Activated B cell treated with CpG ODN at 0.5 μM for 24 hours (primary cell): ENCODE measurements at regions of chr4 and their contacts with region 1.

Region 1: GRCh38 chr4:122732329-122733026 is at the start of gene BBS12:
- DNase-seq: peak; percentile 90
- ATAC-seq: peak; percentile 97
- H3K4me3 Mint-ChIP-seq: peak within 1 kb of the TSS; percentile 98
- H3K27ac Mint-ChIP-seq: peak within 1 kb of the TSS; percentile 98
- H3K4me1 Mint-ChIP-seq: peaks cover 13% of the 10 kb centered on the region
- H3K27me3 Mint-ChIP-seq: no peaks in the 10 kb centered on the region
- CTCF ChIP-seq: no peak
- total RNA-seq, gene BBS12: 2.5 and 3.3 TPM in 2 replicates

Region 2: GRCh38 chr4:121800961-121801714 is 931.3 kb before region 1 on chr4 and contains the start of gene EXOSC9:
- CTCF ChIA-PET with region 1: no interaction called
- POLR2A ChIA-PET with region 1: no interaction called
- intact Hi-C with region 1: loop called (anchors 1 kb)
- DNase-seq: peak; percentile 94
- ATAC-seq: peak; percentile 81
- H3K4me3 Mint-ChIP-seq: peak within 1 kb of the TSS; percentile 96
- H3K27ac Mint-ChIP-seq: peak within 1 kb of the TSS; percentile 100
- H3K4me1 Mint-ChIP-seq: peaks cover 31% of the 10 kb centered on the region
- H3K27me3 Mint-ChIP-seq: no peaks in the 10 kb centered on the region
- CTCF ChIP-seq: no peak
- total RNA-seq, gene EXOSC9: 37.5 and 39.1 TPM in 2 replicates

Region 3: DNA sequence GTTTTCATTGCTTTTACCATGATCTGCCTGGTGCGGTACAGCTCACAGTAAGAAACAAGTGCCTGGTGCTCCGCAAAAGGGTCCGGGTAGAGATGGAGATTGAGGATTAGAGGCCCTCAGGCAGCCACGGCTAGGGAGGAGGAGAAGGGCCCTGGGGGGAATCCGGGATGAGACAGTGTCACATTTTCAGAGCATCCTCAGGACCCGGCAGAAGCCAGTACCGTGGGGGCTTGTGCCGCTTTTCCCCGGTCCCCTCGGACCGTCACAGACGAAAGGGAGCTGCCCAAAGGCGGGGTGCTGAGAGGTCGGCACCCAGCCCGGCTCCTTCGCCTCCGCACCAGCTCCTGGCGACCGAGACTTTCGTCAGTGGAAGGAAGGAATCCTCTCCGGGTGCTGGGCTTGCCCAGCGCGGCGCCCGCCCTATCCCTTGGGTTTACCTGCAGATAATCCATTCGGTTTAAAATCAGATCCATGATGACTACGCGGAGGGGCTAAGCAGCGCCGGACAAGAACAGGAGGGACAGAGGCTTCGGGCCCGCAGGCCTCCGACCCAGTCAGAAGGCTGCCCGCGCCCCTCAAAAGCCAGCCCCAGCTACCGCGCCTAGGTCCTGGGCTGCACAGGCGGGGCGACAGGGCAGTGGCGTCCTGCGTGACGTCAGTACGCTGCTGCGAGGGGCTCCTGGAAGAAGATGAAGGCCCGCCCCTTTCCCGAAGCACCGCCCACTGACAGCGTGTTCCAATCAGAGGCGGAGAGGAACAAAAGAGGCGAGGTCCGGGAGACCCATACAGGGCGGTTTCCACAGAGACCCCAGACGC is 862.4 kb before region 1 on chr4 and contains the start of gene BBS7:
- CTCF ChIA-PET with region 1: no interaction called
- POLR2A ChIA-PET with region 1: no interaction called
- intact Hi-C with region 1: loop called (anchors 1 kb)
- DNase-seq: peak; percentile 96
- ATAC-seq: peak; percentile 99
- H3K4me3 Mint-ChIP-seq: peak within 1 kb of the TSS; percentile 97
- H3K27ac Mint-ChIP-seq: peak within 1 kb of the TSS; percentile 66
- H3K4me1 Mint-ChIP-seq: peaks cover 15% of the 10 kb centered on the region
- H3K27me3 Mint-ChIP-seq: peaks cover 8% of the 10 kb centered on the region
- CTCF ChIP-seq: no peak
- total RNA-seq, gene BBS7: 7.5 and 9.4 TPM in 2 replicates

Region 4: DNA sequence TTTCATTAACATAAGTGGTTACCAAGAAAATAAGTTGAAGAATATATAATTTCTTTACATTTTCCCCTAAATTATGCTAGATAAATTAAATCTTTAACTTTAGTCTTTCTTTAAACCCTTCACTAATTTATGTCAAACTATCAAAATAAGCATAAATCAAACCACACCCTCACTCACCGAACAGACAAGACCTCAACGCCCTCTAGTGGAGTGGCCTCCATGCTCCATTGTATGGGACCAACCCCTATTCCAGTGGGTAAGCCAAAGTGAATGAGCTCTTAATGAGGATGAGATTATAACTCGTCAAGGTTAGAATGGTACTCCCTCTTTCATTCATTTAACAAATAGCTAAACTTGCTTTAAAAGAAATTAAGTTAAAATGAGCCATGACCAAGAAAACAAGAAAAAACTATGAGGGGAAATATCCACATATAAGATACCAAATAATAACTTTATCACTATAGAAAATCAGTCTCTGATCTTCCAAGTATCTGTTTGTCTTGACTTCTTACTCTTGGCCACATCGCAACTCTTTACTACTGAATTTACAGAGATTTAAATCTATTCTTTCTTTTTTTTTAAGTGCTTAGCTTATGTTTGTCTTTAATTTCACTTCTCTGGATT is 15.5 kb before region 1 on chr4:
- CTCF ChIA-PET with region 1: interaction called, 9 read pairs
- POLR2A ChIA-PET with region 1: no interaction called
- intact Hi-C with region 1: loop called (anchors 1 kb)
- DNase-seq: no peak
- ATAC-seq: peak; percentile 82
- H3K4me3 Mint-ChIP-seq: no peak overlapping the region
- H3K27ac Mint-ChIP-seq: no peak overlapping the region
- H3K4me1 Mint-ChIP-seq: no peaks in the 10 kb centered on the region
- H3K27me3 Mint-ChIP-seq: peaks cover 7% of the 10 kb centered on the region
- CTCF ChIP-seq: no peak

Region 5: DNA sequence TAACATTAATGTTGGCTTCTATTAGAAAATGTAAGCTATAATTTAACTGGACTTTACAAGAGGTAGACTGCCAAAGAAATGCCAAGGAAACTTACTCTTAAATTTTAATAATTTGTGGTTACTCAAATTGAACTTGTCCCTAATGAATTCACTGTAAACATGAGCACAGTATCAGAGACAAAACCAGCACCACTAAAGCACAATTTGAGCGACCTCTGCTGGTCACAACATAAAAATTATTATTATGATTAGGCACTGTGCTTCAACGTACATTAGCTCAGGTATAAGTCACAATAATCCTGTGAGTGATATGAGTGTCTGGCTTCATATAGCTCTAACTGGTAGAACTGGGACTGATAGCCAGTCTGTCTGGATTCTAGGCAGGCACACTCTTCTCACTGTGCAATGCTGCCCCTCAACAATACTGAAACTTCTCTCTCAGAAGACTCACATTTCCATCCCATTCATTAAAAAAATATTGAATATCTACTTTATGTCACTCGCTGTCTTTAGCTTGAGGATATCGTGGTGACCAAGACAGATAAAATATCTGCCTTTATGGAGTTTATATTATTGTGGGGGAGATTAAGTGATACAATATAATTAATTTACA is 181.9 kb after region 1 on chr4:
- CTCF ChIA-PET with region 1: interaction called, 11 read pairs
- POLR2A ChIA-PET with region 1: no interaction called
- intact Hi-C with region 1: no loop called
- DNase-seq: no peak
- ATAC-seq: peak; percentile 54
- H3K4me3 Mint-ChIP-seq: no peak overlapping the region
- H3K27ac Mint-ChIP-seq: no peak overlapping the region
- H3K4me1 Mint-ChIP-seq: no peaks in the 10 kb centered on the region
- H3K27me3 Mint-ChIP-seq: no peaks in the 10 kb centered on the region
- CTCF ChIP-seq: no peak

Region 6: DNA sequence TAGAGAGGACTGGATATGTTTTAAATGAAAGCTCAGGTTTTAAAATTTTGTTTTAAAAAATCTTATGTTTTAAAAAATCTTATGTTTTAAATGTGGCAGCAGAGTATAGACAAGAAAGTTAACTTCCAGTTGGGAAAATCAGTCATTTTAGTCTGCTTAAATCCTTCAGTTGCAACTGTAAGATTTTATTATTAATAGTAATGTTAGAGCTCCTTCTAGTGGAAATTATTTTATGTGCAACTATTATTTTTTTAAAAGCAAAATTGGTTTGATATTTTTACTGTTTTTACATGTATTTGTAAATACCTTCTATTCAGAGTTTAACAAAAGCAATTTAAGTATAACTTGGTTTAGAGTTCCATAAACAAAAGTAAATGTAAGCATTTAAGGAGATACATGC is 198.4 kb after region 1 on chr4:
- CTCF ChIA-PET with region 1: interaction called, 6 read pairs
- POLR2A ChIA-PET with region 1: no interaction called
- intact Hi-C with region 1: loop called (anchors 1 kb)
- DNase-seq: no peak
- ATAC-seq: no peak
- H3K4me3 Mint-ChIP-seq: no peak overlapping the region
- H3K27ac Mint-ChIP-seq: no peak overlapping the region
- H3K4me1 Mint-ChIP-seq: no peaks in the 10 kb centered on the region
- H3K27me3 Mint-ChIP-seq: no peaks in the 10 kb centered on the region
- CTCF ChIP-seq: peak; percentile 16

Region 7: DNA sequence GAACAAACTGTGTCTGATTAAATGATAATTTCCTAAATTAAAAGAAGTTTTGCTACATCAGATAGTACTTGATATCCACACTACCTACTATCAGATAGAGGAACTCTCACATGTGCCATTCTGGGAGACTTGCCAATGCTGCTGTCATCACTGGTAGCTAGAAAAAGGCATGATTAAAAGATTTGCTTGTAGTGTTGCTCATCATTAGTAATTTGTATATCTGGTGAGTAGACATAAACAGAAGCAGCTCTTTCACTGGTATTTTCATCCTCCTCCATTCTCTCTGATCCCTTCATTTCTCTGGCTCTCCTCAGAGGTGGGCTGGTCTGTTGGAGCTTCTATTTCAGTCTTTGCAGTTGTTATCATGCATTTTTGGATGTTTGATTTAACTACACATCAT is 720.1 kb after region 1 on chr4:
- CTCF ChIA-PET with region 1: no interaction called
- POLR2A ChIA-PET with region 1: no interaction called
- intact Hi-C with region 1: loop called (anchors 5 kb)
- DNase-seq: no peak
- ATAC-seq: no peak
- H3K4me3 Mint-ChIP-seq: no peak overlapping the region
- H3K27ac Mint-ChIP-seq: no peak overlapping the region
- H3K4me1 Mint-ChIP-seq: peaks cover 51% of the 10 kb centered on the region
- H3K27me3 Mint-ChIP-seq: no peaks in the 10 kb centered on the region
- CTCF ChIP-seq: no peak